Pancreas (tissue), 10 donors: ENCODE measurements at regions of chr3 and their contacts with region 1.

Region 1: GRCh38 chr3:27279123-27279522 is 90.1 kb downstream of the NEK10 start:
- DNase-seq: peak in 1 of 6 donors; percentile 13
- ATAC-seq: peak in 3 of 4 donors; percentile 76 to 90 (median 88)
- H3K4me3 ChIP-seq: no peak overlapping the region
- H3K27ac ChIP-seq: no peak overlapping the region
- H3K4me1 ChIP-seq: peaks cover 0 to 5% (median 0%) of the 10 kb centered on the region in 3 donors
- H3K27me3 ChIP-seq: no peaks in the 10 kb centered on the region
- CTCF ChIP-seq: peak in 2 of 4 donors; percentile 15 to 27

Region 2: DNA sequence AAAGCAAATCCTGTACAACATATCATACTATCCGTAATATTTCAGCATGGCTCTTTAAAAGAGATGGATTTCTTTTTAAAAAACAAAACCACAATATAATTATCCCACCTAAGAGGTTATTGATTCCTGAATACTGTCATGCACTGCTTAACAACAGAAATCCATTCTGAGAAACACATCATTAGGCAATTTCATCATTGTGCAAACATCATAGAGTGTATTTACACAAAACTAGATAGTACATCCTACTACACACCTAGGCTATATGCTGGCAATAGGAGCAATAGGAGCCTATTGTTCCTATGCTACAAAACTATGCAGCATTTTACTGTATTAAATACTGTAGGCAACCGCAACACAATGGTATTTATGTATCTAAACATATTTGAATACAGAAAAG is 151.9 kb before region 1 on chr3:
- intact Hi-C with region 1: loop called in 2 of 3 experiments (anchors 10 kb)
- DNase-seq: no peak
- ATAC-seq: peak in 1 of 4 donors; percentile 67
- H3K4me3 ChIP-seq: no peak overlapping the region
- H3K27ac ChIP-seq: no peak overlapping the region
- H3K4me1 ChIP-seq: no peaks in the 10 kb centered on the region
- H3K27me3 ChIP-seq: no peaks in the 10 kb centered on the region
- CTCF ChIP-seq: no peak

Region 3: GRCh38 chr3:27134165-27134796 is 144.8 kb before region 1 on chr3:
- intact Hi-C with region 1: loop called in 2 of 3 experiments (anchors 10 kb)
- DNase-seq: peak; percentile 26 to 68 (median 55)
- ATAC-seq: peak; percentile 58 to 99 (median 90)
- H3K4me3 ChIP-seq: no peak overlapping the region
- H3K27ac ChIP-seq: no peak overlapping the region
- H3K4me1 ChIP-seq: no peaks in the 10 kb centered on the region
- H3K27me3 ChIP-seq: no peaks in the 10 kb centered on the region
- CTCF ChIP-seq: peak; percentile 61 to 85 (median 79)

Region 4: GRCh38 chr3:27325419-27325818 is 46.3 kb after region 1 on chr3:
- intact Hi-C with region 1: no loop called
- DNase-seq: no peak
- ATAC-seq: no peak
- H3K4me3 ChIP-seq: no peak overlapping the region
- H3K27ac ChIP-seq: no peak overlapping the region
- H3K4me1 ChIP-seq: no peaks in the 10 kb centered on the region
- H3K27me3 ChIP-seq: no peaks in the 10 kb centered on the region
- CTCF ChIP-seq: no peak

Region 5: DNA sequence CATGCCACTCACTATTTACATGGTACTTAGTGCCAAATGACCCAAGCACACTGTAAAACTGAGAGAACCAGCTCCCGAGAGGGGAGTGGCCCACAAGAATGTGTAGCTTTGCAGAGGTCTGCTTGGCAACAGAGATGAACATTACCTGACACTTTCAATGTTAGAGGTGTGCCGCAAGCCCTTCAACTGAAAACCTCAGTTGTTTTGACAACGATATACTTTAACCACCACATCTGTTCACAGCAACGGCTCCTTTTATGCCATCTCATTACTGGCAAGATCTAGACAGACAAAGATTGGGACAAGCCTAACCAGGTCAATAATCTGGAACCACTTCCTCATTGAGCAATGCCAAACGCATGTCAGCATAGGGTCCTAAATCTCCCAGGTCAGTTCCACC is 66.4 kb after region 1 on chr3:
- intact Hi-C with region 1: no loop called
- DNase-seq: no peak
- ATAC-seq: peak; percentile 24 to 56 (median 55)
- H3K4me3 ChIP-seq: no peak overlapping the region
- H3K27ac ChIP-seq: no peak overlapping the region
- H3K4me1 ChIP-seq: no peaks in the 10 kb centered on the region
- H3K27me3 ChIP-seq: no peaks in the 10 kb centered on the region
- CTCF ChIP-seq: no peak

Region 6: DNA sequence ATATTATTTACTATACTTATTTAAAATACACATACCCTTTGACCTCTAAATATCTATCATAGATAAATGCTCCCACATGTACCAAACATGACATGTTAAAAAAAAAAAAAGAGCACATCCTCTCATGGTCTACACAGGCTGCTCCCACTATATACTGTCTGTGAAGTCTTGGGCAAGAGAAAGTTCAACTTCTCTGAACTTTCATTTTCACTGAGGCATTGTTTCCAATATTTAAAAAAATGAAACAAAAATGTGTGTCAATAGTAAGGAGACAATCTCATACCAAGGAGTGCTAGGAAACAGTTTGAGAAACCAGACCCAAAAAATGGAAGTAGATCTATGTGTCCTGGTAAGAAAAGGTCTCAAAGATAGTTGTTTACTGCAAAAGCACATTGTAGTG is 175.8 kb after region 1 on chr3:
- intact Hi-C with region 1: no loop called
- DNase-seq: no peak
- ATAC-seq: no peak
- H3K4me3 ChIP-seq: no peak overlapping the region
- H3K27ac ChIP-seq: no peak overlapping the region
- H3K4me1 ChIP-seq: peaks cover 0 to 1% (median 0%) of the 10 kb centered on the region in 3 donors
- H3K27me3 ChIP-seq: no peaks in the 10 kb centered on the region
- CTCF ChIP-seq: no peak